Colonic mucosa (tissue), 4 donors: ENCODE measurements at regions of chr1 and their contacts with region 1.

Region 1: GRCh38 chr1:224245188-224245587 is 62.1 kb downstream of the DEGS1 start:
- DNase-seq: peak; percentile 43
- H3K4me3 ChIP-seq: no peak overlapping the region
- H3K27ac ChIP-seq: peak overlapping the region; percentile 74
- H3K4me1 ChIP-seq: no peaks in the 10 kb centered on the region
- H3K27me3 ChIP-seq: no peaks in the 10 kb centered on the region
- CTCF ChIP-seq: no peak

Region 2: GRCh38 chr1:223639331-223639749 is 605.8 kb before region 1 on chr1:
- intact Hi-C with region 1: no loop called
- DNase-seq: peak; percentile 42
- H3K4me3 ChIP-seq: no peak overlapping the region
- H3K27ac ChIP-seq: peak overlapping the region; percentile 71
- H3K4me1 ChIP-seq: peaks cover 6% of the 10 kb centered on the region
- H3K27me3 ChIP-seq: no peaks in the 10 kb centered on the region
- CTCF ChIP-seq: no peak

Region 3: DNA sequence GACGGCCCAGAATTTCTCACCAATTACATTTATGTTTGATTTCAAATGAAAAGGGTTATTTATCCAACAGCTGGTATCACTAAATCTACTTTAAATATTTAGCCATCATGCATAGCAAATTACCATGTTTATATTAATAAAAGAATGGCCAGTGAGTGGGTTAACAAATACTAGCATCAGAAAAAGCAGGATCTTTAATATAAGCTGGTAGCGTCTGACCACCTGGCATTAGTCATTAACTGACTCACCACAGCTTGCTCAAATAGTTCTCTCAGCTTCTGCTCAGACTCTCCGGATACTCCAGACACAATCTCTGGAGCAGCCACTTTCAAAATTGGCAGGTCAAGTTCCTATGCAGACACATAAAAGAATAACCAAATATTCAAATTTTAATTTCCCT is 55.1 kb after region 1 on chr1:
- intact Hi-C with region 1: loop called (anchors 10 kb)
- DNase-seq: no peak
- H3K4me3 ChIP-seq: no peak overlapping the region
- H3K27ac ChIP-seq: no peak overlapping the region
- H3K4me1 ChIP-seq: no peaks in the 10 kb centered on the region
- H3K27me3 ChIP-seq: no peaks in the 10 kb centered on the region
- CTCF ChIP-seq: no peak

Region 4: DNA sequence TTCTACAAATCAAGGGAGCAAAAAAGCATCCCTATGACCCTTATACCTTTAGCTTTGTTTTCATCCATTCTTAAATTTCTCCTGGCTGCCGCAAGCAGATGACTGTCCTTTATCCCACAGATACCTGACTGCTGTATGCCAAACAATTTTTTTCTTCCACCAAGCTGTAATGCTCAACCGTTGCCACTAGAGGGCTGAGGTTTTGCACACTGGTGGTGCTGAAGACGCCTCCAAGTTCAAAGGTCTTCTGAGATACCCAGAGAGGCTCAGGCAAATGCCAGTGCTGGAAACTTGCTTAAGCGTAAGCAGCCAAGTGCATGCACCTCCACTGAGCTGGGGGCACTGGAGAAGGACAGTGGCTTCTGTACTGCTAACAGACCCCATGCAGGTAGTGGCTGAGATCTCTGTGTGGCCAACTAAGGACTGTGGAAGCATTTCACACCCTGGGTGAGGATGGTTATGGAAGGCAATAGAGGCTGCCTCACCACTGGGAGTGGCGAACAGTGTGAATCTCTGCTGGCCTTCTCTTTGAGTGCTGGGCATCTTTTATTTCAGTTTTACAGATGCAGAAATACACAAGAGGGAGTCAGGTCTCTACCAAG is 399.5 kb after region 1 on chr1:
- intact Hi-C with region 1: no loop called
- DNase-seq: peak; percentile 73
- H3K4me3 ChIP-seq: no peak overlapping the region
- H3K27ac ChIP-seq: no peak overlapping the region
- H3K4me1 ChIP-seq: no peaks in the 10 kb centered on the region
- H3K27me3 ChIP-seq: no peaks in the 10 kb centered on the region
- CTCF ChIP-seq: peak; percentile 89